ENCODE measurements at regions of chr14 and their contacts with region 1.

Region 1: GRCh38 chr14:74945823-74946682 is 9.3 kb downstream of the PGF start:
- DNase-seq: peak; percentile 39
- ATAC-seq: peak; percentile 92
- H3K4me3 ChIP-seq: no peak overlapping the region
- H3K27ac ChIP-seq: no peak overlapping the region
- H3K4me1 ChIP-seq: no peaks in the 10 kb centered on the region
- H3K27me3 ChIP-seq: no peaks in the 10 kb centered on the region
- CTCF ChIP-seq: peak; percentile 79 to 97 (median 93)
- POLR2A ChIP-seq: peak; percentile 29
- RAD21 ChIP-seq: peak; percentile 86

Region 2: DNA sequence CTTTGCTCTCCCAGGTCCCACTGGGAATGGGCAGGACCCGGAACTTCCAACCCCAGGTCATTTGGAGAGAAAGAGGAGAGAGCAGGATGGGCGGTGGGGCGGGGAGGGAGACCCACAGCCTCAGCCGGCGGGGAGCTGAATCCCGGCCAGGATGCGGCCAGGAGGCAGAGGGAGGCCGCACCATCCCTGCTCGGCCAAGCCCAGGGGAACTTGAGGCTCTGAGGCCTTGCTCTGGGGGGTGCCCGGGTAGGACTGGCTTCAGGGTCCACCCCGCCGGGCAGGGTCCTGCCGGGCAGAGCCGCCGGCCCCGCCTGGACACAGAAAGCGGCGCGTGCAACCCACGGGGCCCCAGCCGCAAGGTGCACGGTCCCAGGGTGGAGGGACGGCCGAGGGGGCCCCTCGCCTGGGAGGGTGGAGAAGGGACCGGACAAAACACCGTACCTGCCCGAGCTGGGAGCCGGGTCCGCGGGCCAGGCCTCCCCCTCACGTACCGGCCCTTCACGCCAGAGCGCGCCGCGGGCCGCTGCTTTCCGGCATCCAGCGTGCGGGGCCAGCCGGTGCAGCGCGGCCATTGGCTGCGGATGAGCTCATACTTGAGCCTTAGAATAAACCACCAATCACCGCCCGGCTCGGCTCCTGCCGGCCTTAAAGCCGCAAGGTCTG is 23.2 kb before region 1 on chr14 and contains the start of gene RPS6KL1:
- CTCF ChIA-PET with region 1: interaction called, 29 read pairs
- POLR2A ChIA-PET with region 1: no interaction called
- RAD21 ChIA-PET with region 1: interaction called in 1 of 2 experiments, 5 read pairs
- intact Hi-C with region 1: no loop called
- DNase-seq: peak; percentile 68
- ATAC-seq: peak; percentile 98
- H3K4me3 ChIP-seq: peak within 1 kb of the TSS; percentile 74 to 90
- H3K27ac ChIP-seq: no peak within 1 kb of the TSS
- H3K4me1 ChIP-seq: peaks cover 0 to 12% of the 10 kb centered on the region in 2 experiments; a peak in 2 of 4 replicates
- H3K27me3 ChIP-seq: no peaks in the 10 kb centered on the region
- CTCF ChIP-seq: no peak
- POLR2A ChIP-seq: no peak
- RAD21 ChIP-seq: no peak
- total RNA-seq, gene RPS6KL1: 6.7 TPM

Region 3: GRCh38 chr14:74932401-74932901 is 13.6 kb before region 1 on chr14:
- CTCF ChIA-PET with region 1: interaction called, 14 read pairs
- POLR2A ChIA-PET with region 1: no interaction called
- RAD21 ChIA-PET with region 1: no interaction called
- intact Hi-C with region 1: no loop called
- DNase-seq: no peak
- ATAC-seq: no peak
- H3K4me3 ChIP-seq: no peak overlapping the region
- H3K27ac ChIP-seq: no peak overlapping the region
- H3K4me1 ChIP-seq: no peaks in the 10 kb centered on the region
- H3K27me3 ChIP-seq: no peaks in the 10 kb centered on the region
- CTCF ChIP-seq: no peak
- POLR2A ChIP-seq: no peak
- RAD21 ChIP-seq: no peak

Region 4: DNA sequence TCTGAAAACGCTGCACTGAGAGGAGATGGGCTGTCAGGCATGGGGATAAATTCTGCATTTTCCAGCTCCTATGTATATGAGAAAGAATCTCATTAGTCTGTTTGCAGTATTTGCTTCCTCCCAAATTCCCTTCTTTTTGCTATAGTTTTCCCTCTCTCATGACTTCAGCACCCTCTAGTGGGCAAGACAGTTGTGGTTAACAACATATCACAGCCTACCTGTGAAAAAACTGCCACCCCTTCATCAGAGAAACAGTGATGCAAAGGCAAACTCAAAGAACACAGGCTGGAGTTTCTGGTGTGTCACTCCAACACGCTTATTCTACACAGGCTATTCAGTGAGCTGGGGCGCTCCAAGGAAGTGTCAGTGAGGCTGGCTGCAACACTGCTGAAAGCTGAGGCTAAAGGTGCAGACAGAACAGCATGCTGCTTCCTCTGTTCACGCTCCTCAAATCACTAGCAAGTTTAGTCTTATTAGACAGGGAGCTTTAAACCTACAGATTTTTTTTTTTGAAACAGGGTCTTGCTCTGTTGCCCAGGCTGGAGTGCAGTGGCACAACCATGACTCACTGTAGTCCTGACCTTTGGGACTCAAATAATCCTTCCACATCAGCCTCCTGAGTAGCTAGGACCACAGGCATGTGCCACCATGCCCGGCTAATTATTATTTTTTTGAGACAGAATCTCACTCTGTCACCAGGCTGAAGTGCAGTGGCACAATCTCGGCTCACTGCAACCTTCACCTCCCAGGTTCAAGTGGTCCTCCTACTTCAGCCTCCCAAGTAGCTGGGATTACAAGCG is 142.7 kb after region 1 on chr14:
- CTCF ChIA-PET with region 1: interaction called, 27 read pairs
- POLR2A ChIA-PET with region 1: no interaction called
- RAD21 ChIA-PET with region 1: interaction called in 1 of 2 experiments, 4 read pairs
- intact Hi-C with region 1: loop called (anchors 1 kb)
- DNase-seq: peak; percentile 26
- ATAC-seq: peak; percentile 77
- H3K4me3 ChIP-seq: no peak overlapping the region
- H3K27ac ChIP-seq: no peak overlapping the region
- H3K4me1 ChIP-seq: no peaks in the 10 kb centered on the region
- H3K27me3 ChIP-seq: no peaks in the 10 kb centered on the region
- CTCF ChIP-seq: peak; percentile 79 to 85 (median 84)
- POLR2A ChIP-seq: no peak
- RAD21 ChIP-seq: peak; percentile 92

Region 5: DNA sequence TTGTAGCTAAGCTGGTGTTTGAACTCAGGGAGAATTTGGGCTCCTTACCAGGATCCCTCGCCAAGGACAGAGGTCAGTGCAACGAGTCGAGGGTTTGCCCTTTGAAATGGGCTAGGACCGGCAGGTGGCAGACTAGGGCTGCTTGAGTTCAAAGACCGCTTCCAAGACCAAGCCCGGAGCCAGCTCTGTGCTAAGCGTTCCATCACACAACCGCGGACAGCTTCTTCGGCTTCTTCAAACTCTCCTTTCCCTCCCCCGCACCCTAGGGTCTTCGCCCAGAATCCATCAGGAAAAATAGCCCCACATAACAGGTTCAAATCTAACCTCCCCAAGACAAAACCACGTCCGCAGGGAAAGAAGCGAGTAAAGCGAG is 631.7 kb after region 1 on chr14:
- CTCF ChIA-PET with region 1: no interaction called
- POLR2A ChIA-PET with region 1: no interaction called
- RAD21 ChIA-PET with region 1: no interaction called
- intact Hi-C with region 1: no loop called
- DNase-seq: peak; percentile 65
- ATAC-seq: peak; percentile 94
- H3K4me3 ChIP-seq: peak overlapping the region; percentile 50 to 65
- H3K27ac ChIP-seq: 0 out of 2 replicates have a peak overlapping the region, but pooled peaks have one; percentile 4
- H3K4me1 ChIP-seq: peaks cover 9 to 19% of the 10 kb centered on the region in 2 experiments; a peak in 3 of 4 replicates
- H3K27me3 ChIP-seq: 0 out of 2 replicates have a peak, but pooled peaks cover 7% of the 10 kb centered on the region
- CTCF ChIP-seq: peak; percentile 71 to 78 (median 78)
- POLR2A ChIP-seq: no peak
- RAD21 ChIP-seq: peak; percentile 87